WTC11 (cell line): ENCODE measurements at regions of chr15 and their contacts with region 1.

Region 1: GRCh38 chr15:74302821-74303359 is 64.6 kb downstream of the CYP11A1 start:
- DNase-seq: peak; percentile 86
- ATAC-seq: peak; percentile 67
- H3K4me3 Mint-ChIP-seq: peak overlapping the region; percentile 37
- H3K27ac Mint-ChIP-seq: no peak overlapping the region
- H3K4me1 Mint-ChIP-seq: peaks cover 79% of the 10 kb centered on the region
- H3K27me3 Mint-ChIP-seq: peaks cover 57% of the 10 kb centered on the region
- CTCF ChIP-seq: peak; percentile 80

Region 2: DNA sequence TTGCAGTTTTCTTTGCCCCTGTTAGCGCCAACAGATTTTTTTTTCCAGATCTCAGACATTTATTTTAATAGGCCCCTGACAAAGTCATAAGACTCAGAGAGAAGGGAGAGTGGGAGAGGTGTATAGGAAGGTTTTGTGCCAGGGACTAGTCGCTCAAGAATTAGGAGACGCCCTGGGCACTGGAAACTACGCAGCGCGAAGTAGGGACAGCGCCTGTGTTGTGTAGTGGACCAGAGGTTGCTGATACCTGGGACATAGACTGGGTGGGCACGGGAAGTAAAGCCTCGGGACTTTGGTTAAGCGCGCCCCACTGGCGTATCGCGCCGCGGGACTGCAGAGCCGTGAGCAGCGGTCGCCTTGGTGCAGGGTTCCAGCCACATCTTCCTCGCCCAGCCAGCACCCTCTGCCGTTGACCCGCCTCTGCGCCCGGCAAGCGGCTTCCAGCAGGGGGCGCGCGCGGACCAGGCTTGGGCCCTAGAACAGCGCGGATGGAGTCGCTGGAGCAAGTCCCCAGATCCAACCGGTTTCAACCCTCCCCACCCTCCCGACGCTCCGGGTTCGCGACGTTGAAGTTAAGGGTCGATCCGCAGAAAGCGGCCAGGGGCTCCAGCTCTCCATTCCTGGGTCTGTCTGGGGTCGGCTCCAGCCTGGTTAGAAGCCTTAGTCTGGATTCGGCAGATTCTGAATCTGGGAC is 175.5 kb before region 1 on chr15:
- CTCF ChIA-PET with region 1: interaction called, 89 read pairs
- POLR2A ChIA-PET with region 1: interaction called, 4 read pairs
- DNase-seq: peak; percentile 98
- ATAC-seq: peak; percentile 69
- H3K4me3 Mint-ChIP-seq: peak overlapping the region; percentile 73
- H3K27ac Mint-ChIP-seq: no peak overlapping the region
- H3K4me1 Mint-ChIP-seq: peaks cover 60% of the 10 kb centered on the region
- H3K27me3 Mint-ChIP-seq: peaks cover 76% of the 10 kb centered on the region
- CTCF ChIP-seq: peak; percentile 99

Region 3: DNA sequence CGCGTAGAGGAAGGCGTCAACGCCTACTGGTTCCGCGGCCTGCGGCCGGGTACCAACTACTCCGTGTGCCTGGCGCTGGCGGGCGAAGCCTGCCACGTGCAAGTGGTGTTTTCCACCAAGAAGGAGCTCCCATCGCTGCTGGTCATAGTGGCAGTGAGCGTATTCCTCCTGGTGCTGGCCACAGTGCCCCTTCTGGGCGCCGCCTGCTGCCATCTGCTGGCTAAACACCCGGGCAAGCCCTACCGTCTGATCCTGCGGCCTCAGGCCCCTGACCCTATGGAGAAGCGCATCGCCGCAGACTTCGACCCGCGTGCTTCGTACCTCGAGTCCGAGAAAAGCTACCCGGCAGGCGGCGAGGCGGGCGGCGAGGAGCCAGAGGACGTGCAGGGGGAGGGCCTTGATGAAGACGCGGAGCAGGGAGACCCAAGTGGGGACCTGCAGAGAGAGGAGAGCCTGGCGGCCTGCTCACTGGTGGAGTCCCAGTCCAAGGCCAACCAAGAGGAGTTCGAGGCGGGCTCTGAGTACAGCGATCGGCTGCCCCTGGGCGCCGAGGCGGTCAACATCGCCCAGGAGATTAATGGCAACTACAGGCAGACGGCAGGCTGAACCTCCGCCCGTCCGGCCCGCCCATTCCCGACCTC is 168.4 kb before region 1 on chr15:
- CTCF ChIA-PET with region 1: interaction called, 89 read pairs
- POLR2A ChIA-PET with region 1: interaction called, 4 read pairs
- DNase-seq: peak; percentile 84
- ATAC-seq: peak; percentile 43
- H3K4me3 Mint-ChIP-seq: peak overlapping the region; percentile 67
- H3K27ac Mint-ChIP-seq: no peak overlapping the region
- H3K4me1 Mint-ChIP-seq: peaks cover 65% of the 10 kb centered on the region
- H3K27me3 Mint-ChIP-seq: peaks cover 98% of the 10 kb centered on the region
- CTCF ChIP-seq: peak; percentile 62

Region 4: DNA sequence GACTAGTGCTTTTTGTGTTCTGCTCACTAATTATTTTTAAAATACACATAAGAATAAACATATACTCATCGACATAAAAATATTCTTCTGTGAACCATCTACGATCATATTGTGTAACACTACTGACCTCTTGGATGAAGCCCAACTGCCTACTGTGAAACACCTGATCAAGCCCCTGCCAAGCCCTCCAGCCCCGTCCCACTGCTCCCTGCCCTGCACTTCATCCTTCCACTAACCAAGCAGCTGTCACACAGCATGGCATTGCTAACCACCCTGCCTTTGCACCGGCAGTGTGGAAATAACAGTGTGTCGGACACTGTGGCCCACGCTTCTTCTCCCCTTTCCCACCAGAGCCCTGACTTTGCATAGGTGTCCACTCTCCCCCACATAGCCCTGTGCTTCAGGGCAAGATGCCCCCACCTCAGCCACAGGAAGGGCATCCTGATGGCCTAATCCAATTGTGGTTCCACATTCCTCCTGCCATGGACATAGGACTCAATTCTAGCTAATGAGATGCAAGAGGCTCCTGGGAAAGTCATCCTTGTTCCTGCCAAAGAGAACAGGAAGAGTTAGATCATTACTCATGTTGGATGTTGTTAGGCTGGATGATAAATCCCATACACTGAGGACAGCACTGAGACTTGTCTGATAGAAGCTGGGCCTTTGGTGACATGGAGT is 203.1 kb after region 1 on chr15:
- CTCF ChIA-PET with region 1: no interaction called
- POLR2A ChIA-PET with region 1: no interaction called
- DNase-seq: no peak
- ATAC-seq: no peak
- H3K4me3 Mint-ChIP-seq: no peak overlapping the region
- H3K27ac Mint-ChIP-seq: 0 out of 2 replicates have a peak overlapping the region, but pooled peaks have one; percentile 54
- H3K4me1 Mint-ChIP-seq: no peaks in the 10 kb centered on the region
- H3K27me3 Mint-ChIP-seq: no peaks in the 10 kb centered on the region
- CTCF ChIP-seq: no peak